ENCODE measurements at regions of chrX and their contacts with region 1.

Region 1: GRCh38 chrX:69222103-69223090 is 57.1 kb upstream of the PJA1 start:
- DNase-seq: peak; percentile 53 to 66
- H3K4me3 ChIP-seq: no peak overlapping the region
- H3K27ac ChIP-seq: no peak overlapping the region
- H3K4me1 ChIP-seq: no peaks in the 10 kb centered on the region
- H3K27me3 ChIP-seq: no peaks in the 10 kb centered on the region
- CTCF ChIP-seq: peak; percentile 55 to 68 (median 60)
- POLR2A ChIP-seq: no peak

Region 2: DNA sequence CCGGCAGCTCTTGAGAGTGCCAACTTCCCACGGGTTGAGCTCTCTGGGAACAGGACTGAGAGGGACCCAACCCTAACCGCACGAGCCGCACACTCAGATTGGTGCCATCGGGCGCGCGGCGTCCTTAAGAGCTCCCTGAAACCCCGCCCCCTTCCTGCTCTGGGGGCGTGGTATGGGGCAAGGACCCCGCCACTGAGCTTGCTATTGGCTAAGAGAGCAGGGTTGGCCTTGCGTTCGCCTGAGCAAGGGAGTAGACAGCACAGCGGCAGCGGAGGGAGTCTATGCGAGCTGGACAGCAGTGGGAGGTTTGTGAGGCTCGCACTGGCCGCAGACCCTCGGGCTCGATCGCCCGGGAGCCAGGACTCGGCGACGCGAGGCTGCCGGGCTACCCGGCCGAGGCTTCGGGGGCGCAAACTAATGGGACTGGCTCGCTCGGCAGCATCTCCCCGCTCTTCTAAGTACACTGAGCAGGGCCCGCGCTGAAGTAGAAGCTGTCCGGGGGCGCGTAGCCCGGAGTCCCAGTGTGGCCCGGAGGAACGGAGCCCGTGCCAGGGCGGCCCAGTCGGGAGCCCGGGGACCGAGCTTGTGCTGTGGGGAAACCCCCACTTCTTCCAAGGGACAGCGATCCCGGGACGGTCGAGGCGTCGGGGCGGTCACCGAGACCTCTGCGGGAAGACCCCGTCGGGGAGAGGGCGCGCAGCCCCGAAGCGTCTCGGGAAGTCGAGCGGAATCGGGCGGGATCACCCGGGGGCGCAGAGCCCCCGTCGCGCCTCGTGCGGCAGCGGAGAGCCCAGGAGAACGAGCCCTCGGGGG is 393.5 kb before region 1 on chrX and contains the start of gene EFNB1:
- intact Hi-C with region 1: loop called (anchors 10 kb)
- DNase-seq: peak; percentile 92 to 94
- H3K4me3 ChIP-seq: peak within 1 kb of the TSS; percentile 59 to 62
- H3K27ac ChIP-seq: peak within 1 kb of the TSS; percentile 74 to 82
- H3K4me1 ChIP-seq: no peaks in the 10 kb centered on the region
- H3K27me3 ChIP-seq: peaks cover 0 to 4% of the 10 kb centered on the region in 2 donors
- CTCF ChIP-seq: peak in 1 of 4 experiments; percentile 17
- POLR2A ChIP-seq: peak; percentile 95 to 98
- total RNA-seq, gene EFNB1: 8.8 to 59.1 (median 28.7) TPM